ENCODE measurements at regions of chr18 and their contacts with region 1.

Region 1: GRCh38 chr18:46173393-46174341 is 69.5 kb downstream of the HAUS1 start:
- DNase-seq: peak; percentile 91
- H3K4me3 Mint-ChIP-seq: peak overlapping the region; percentile 97
- H3K27ac Mint-ChIP-seq: peak overlapping the region; percentile 100
- H3K4me1 Mint-ChIP-seq: peaks cover 51% of the 10 kb centered on the region
- H3K27me3 Mint-ChIP-seq: no peaks in the 10 kb centered on the region

Region 2: GRCh38 chr18:45775241-45775676 is 398.4 kb before region 1 on chr18:
- intact Hi-C with region 1: no loop called
- DNase-seq: peak; percentile 18
- H3K4me3 Mint-ChIP-seq: peak overlapping the region; percentile 76
- H3K27ac Mint-ChIP-seq: peak overlapping the region; percentile 14
- H3K4me1 Mint-ChIP-seq: peaks cover 15% of the 10 kb centered on the region
- H3K27me3 Mint-ChIP-seq: peaks cover 54% of the 10 kb centered on the region

Region 3: GRCh38 chr18:45967007-45967706 is 206.5 kb before region 1 on chr18 and contains the start of gene EPG5:
- intact Hi-C with region 1: loop called (anchors 5 kb)
- DNase-seq: peak; percentile 93
- H3K4me3 Mint-ChIP-seq: peak within 1 kb of the TSS; percentile 97
- H3K27ac Mint-ChIP-seq: peak within 1 kb of the TSS; percentile 91
- H3K4me1 Mint-ChIP-seq: peaks cover 38% of the 10 kb centered on the region
- H3K27me3 Mint-ChIP-seq: peaks cover 2% of the 10 kb centered on the region
- total RNA-seq, gene EPG5: 14.3 and 14.6 TPM in 2 replicates

Region 4: DNA sequence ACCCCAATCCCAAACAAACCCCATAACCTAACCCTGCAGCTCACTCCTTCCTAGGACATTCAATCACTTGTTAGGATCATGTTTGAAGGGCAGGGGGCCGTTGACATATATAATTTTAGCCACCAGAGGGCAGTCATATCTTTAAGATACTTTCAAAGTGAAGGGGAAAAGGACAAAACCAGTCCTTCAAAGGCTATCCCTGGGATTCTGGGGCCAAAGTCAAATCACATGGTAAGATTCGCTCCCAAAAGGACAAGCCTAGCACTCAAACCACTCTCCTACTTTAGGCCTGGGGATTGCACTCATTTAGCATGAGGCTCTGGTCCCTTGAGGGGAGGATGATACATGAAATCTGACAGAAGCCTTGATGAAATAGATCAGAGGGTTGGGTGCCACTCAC is 24.9 kb before region 1 on chr18:
- intact Hi-C with region 1: loop called (anchors 1 kb)
- DNase-seq: peak; percentile 38
- H3K4me3 Mint-ChIP-seq: no peak overlapping the region
- H3K27ac Mint-ChIP-seq: peak overlapping the region; percentile 7
- H3K4me1 Mint-ChIP-seq: peaks cover 30% of the 10 kb centered on the region
- H3K27me3 Mint-ChIP-seq: peaks cover 2% of the 10 kb centered on the region

Region 5: GRCh38 chr18:46213295-46213694 is 39.6 kb after region 1 on chr18:
- intact Hi-C with region 1: loop called (anchors 1 kb)
- DNase-seq: no peak
- H3K4me3 Mint-ChIP-seq: no peak overlapping the region
- H3K27ac Mint-ChIP-seq: peak overlapping the region; percentile 37
- H3K4me1 Mint-ChIP-seq: peaks cover 59% of the 10 kb centered on the region
- H3K27me3 Mint-ChIP-seq: no peaks in the 10 kb centered on the region

Region 6: GRCh38 chr18:46333431-46334135 is 159.9 kb after region 1 on chr18:
- intact Hi-C with region 1: loop called (anchors 5 kb)
- DNase-seq: peak; percentile 34
- H3K4me3 Mint-ChIP-seq: peak overlapping the region; percentile 76
- H3K27ac Mint-ChIP-seq: peak overlapping the region; percentile 2
- H3K4me1 Mint-ChIP-seq: peaks cover 39% of the 10 kb centered on the region
- H3K27me3 Mint-ChIP-seq: peaks cover 56% of the 10 kb centered on the region

Region 7: DNA sequence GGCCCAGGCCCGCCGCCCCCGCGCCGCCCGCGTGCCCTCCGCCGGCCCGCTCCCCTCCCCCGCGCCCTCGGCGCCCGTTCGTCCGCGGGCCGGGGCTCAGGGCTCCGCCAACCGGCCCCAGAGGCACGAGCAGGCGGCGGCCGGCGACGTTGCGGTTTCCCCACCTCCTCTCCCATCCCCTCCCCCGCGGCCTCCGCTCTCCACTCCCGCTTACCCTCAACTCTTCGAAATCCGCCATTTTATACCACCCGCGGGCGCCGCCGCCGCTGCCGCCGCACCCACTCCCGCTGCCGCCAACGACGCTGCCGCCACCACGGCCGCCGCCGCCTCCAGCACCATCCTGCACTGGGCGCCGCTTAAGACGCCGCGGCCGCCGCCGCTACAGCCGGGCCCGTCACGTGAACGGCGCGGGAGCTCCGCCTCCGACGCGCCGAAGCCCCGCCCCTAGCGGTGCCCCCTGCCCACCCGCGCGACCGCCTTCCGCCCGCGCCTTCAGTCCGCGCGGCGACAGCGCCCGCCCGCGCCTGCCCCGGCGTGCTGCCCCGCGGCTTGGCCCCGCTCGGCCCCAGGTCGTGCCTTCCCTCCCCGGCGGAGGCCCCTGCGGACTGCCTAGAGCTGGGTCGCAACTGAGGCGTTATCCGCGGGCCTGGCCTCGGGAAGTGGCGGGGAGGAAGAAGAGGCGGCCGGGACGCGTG is 743.6 kb after region 1 on chr18 and contains the starts of genes KATNAL2 and PIAS2:
- intact Hi-C with region 1: loop called (anchors 10 kb)
- DNase-seq: peak; percentile 68
- H3K4me3 Mint-ChIP-seq: peak within 1 kb of the TSS; percentile 94
- H3K27ac Mint-ChIP-seq: peak within 1 kb of the TSS; percentile 90
- H3K4me1 Mint-ChIP-seq: peaks cover 49% of the 10 kb centered on the region
- H3K27me3 Mint-ChIP-seq: peaks cover 5% of the 10 kb centered on the region
- total RNA-seq, gene KATNAL2: 0.26 and 0.27 TPM in 2 replicates
- total RNA-seq, gene PIAS2: 28.5 and 28.7 TPM in 2 replicates